ENCODE measurements at regions of chr14 and their contacts with region 1.

Region 1: GRCh38 chr14:76352639-76353281 is 23.2 kb upstream of the ESRRB start:
- DNase-seq: no peak
- H3K4me3 ChIP-seq: peak overlapping the region; percentile 38
- CTCF ChIP-seq: peak; percentile 94

Region 2: DNA sequence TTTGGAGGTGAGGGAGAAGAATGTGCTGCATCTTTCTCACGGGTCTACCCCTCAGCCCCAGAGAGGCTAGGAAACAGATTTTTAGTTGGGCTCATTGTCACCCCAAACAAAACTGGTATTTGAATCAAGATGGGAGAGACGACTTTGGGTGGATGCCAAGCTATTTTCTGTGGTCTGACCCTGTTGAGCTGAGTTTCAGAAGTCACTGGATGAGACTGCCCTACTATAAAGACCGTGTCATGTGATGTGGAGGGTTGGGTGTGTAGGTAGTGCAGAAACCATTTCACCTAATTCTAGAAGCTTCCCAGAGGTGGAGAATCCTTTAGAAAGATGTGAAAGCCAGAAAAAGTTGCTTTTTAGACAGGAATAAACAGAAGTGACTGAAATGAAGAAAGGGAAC is 307.0 kb before region 1 on chr14:
- CTCF ChIA-PET with region 1: interaction called, 198 read pairs
- POLR2A ChIA-PET with region 1: no interaction called
- DNase-seq: no peak
- H3K4me3 ChIP-seq: no peak overlapping the region
- CTCF ChIP-seq: no peak

Region 3: DNA sequence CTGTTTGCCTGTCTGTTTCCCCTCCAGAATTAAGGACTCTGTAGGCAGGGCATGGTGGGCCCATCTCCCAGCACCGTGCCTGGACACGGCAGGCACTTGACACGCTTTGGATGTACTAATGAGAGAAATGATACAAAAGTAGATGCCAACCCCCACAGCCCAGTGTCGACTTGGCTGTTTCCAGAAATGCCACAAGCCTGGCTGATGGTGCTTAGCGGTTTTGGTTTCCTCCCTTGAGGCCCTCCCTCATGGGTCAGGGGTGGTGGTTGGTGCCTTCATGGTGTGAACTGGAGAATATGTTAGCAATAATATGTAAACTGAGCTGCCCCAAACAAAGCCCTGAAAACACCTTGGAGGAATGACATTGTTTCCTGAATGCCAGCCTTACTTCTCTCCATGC is 32.3 kb before region 1 on chr14:
- CTCF ChIA-PET with region 1: no interaction called
- POLR2A ChIA-PET with region 1: no interaction called
- DNase-seq: no peak
- H3K4me3 ChIP-seq: no peak overlapping the region
- CTCF ChIP-seq: no peak

Region 4: DNA sequence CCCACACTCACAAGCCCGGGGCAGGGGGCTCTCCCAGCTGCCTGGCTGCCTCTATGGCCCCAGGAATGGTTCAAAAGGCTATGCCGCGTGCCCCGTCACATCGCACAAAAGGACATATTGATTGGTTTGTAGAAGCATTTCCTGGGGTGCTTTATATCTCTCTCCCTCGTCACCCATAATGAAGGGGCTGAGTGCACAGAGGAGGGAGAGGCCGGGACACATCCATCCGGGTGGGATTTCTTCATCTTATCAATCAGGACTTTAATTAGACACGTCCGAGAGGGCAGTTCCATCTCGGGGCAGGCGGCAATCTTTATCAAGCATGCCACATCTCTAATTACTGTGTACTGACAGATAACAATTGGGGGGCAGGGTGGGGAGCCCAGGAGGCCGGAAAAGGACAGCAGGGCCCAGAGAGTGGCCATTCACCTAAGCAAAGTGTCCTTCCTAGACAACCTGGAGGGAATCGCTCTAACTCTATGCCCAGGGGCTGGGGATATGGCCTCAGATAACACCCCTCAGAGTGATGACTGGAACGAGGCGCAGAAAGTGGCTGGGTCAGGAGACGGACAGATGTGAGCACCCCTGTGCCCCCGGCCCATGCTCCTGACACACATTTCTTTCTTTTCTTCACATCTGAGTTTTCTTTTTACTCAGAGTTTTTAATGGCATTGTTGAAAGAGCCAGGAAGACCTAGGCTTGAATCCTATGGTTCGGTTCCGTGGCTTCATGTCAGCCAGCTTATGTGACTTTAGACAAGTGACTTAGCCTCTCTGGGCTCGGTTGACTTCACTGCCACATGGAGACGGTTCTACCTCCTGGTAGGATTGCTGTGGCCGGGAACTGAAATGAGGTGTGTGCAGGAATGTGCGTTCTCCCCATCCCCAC is 12.8 kb before region 1 on chr14:
- CTCF ChIA-PET with region 1: interaction called, 12 read pairs
- POLR2A ChIA-PET with region 1: no interaction called
- DNase-seq: no peak
- H3K4me3 ChIP-seq: no peak overlapping the region
- CTCF ChIP-seq: no peak

Region 5: GRCh38 chr14:76373456-76373855 is 20.7 kb after region 1 on chr14:
- CTCF ChIA-PET with region 1: interaction called, 17 read pairs
- POLR2A ChIA-PET with region 1: no interaction called
- DNase-seq: no peak
- H3K4me3 ChIP-seq: no peak overlapping the region
- CTCF ChIP-seq: no peak

Region 6: DNA sequence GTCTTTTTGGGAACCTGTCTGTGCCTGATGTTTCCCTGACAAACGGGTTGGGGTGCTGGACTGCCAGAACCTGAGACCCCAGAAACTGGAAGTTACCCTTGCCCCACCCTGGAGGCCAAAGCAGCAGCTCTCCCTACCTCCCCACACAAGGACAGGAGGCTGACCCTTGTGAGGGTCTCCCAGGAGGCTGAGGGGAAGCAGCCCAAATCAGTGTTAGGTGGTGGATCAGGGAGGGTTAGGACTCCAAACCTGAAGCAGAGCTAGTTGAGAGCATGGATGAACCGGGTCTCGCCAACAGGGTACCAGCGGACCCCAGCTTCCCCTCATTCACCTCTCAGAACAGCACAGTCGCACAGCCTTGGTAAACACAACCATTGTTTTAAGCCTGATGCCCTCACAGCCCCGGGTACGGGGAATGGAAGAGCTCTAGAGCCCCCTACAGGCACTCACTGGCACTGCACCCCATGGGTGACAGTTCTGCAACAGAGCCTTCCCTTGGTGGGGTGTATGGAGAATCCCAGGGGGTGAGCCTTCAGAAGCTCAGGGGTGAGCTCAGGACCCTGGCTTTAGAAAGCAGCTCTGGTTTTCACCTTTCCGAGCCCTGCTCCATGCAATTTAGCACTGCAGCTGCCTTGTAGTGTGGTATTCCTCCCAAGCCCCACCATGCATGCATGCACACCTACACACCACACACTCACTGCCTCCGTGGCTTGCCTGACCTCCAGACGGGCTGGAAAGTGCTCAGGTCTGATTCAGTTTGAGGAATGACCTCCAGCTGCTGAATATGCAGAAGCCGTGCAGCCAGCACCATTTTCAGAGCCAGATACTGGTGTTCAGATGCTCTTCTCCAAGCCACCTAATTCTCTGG is 34.4 kb after region 1 on chr14:
- CTCF ChIA-PET with region 1: interaction called, 24 read pairs
- POLR2A ChIA-PET with region 1: no interaction called
- DNase-seq: no peak
- H3K4me3 ChIP-seq: no peak overlapping the region
- CTCF ChIP-seq: peak; percentile 95

Measured in AG04449 (cell line).